K562 (cell line): ENCODE measurements at regions of chr2 and their contacts with region 1.

Region 1: DNA sequence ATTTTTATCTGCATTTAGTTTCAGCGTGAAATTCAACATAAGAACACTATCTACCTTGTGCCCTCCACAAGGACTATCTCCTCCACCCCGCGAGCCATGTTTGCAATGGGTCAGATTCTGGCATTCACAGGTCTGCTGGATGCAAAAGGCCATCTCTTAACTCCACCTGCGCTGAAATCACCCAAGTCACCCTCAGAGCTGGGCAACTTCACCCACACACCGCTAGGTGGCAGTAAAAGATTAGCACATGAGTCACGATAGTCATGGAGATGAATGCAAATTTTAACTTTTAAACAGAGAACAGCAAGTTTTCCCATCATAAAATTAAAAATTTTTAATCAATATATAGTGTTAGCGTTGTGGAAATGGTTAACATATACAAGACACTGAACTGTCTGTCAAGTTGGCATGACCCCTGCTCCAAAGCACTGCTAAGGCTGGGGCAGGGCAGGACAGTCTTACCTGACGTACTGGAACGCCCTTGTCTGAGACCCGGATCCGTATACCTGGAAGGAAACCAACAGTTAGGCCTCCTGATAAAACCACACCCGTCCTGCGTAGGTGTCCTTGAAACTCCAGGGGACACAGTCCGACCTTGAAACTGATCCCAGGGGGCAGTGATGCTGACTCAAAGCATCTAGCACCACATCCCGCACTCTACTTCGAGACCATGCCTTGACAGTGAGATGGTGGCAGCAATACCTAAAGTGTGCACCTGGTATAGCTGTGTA is 89.6 kb downstream of the UXS1 start:
- DNase-seq: peak; percentile 76 to 80 (median 78)
- ATAC-seq: peak; percentile 95
- H3K4me3 ChIP-seq: no peak overlapping the region
- H3K27ac ChIP-seq: no peak overlapping the region; the same call in 2 of the 3 replicates
- H3K4me1 ChIP-seq: no peaks in the 10 kb centered on the region
- H3K27me3 ChIP-seq: no peaks in the 10 kb centered on the region
- CTCF ChIP-seq: peak; percentile 74 to 93 (median 90)
- EP300 ChIP-seq: no peak
- POLR2A ChIP-seq: no peak
- RAD21 ChIP-seq: peak; percentile 88 to 94

Region 2: DNA sequence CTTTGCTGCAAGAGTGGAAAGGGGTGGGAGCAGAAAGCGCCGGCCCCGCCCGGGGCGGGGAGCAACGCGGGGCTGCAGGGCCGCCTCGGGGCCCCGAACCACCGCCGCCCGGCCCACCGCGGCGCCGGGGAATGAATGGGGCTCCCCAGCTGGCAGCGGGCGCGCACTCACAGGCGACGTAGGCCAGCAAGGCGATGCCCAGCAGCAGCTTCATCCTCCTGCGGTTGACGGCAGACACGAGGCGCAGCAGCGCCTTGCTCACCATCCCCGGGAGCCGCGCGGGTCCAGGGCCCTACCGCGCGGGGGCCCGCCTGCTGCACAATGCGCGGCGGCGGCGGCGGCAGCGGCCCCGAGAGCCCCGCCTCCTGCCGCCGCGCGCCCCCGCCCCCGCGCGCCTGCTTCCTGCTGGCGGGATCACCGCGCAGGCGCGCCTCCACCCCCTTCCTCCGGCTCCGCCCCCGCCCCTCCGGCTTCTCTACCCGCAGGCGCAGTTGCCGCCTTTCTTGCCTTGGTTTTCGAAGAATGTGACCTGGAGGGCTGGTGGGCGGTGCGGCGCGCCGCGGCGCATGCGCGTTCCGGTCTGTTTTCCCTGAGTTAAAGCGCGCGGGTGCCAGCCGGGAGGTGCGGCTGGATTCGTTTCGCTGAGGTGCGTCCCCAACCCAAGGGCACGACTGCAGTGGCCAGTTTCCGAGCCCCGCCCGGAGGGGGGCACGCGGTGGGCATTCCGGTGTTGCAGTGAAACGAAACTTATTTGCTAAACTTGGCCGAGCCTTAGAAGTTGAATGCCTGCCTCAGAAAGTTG is 89.7 kb after region 1 on chr2 and contains the start of gene UXS1:
- CTCF ChIA-PET with region 1: no interaction called
- POLR2A ChIA-PET with region 1: no interaction called
- in situ Hi-C with region 1: no loop called
- intact Hi-C with region 1: loop called (anchors 5 kb)
- DNase-seq: peak; percentile 98 to 99 (median 99)
- ATAC-seq: peak; percentile 87
- H3K4me3 ChIP-seq: peak within 1 kb of the TSS; percentile 97
- H3K27ac ChIP-seq: peak within 1 kb of the TSS; percentile 81
- H3K4me1 ChIP-seq: peaks cover 23 to 26% of the 10 kb centered on the region in 2 experiments; a peak in 4 of 5 replicates
- H3K27me3 ChIP-seq: no peaks in the 10 kb centered on the region
- CTCF ChIP-seq: 0 out of 6 replicates have a peak, but pooled peaks of 1 of the 3 experiments have one; percentile 3
- EP300 ChIP-seq: no peak
- POLR2A ChIP-seq: peak; percentile 85
- RAD21 ChIP-seq: peak in 1 of 2 experiments; percentile 6; a peak in 1 of 4 replicates
- polyA plus RNA-seq, gene UXS1: 5.8 to 11.3 TPM

Region 3: DNA sequence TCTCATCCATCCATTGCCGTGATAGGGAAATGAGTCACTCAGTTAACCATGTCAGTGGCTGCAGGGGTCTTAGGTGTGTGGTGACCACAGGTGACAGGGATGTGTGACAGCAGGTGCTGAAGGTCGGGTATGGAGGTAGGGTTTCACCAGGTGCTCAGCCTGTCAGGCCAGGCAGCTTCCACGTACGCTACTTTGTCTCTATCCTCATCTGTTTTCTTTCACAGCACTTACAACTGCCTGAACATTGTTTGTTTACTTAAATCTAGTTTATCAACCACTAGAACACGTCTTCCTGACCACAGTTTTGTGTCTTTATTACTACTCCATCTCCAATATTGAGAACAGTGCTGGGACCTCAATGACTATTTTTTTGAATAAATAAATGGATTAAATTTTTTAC is 101.0 kb after region 1 on chr2:
- CTCF ChIA-PET with region 1: no interaction called
- POLR2A ChIA-PET with region 1: interaction called, 3 read pairs
- in situ Hi-C with region 1: no loop called
- intact Hi-C with region 1: loop called (anchors 5 kb)
- DNase-seq: no peak
- ATAC-seq: no peak
- H3K4me3 ChIP-seq: no peak overlapping the region
- H3K27ac ChIP-seq: no peak overlapping the region
- H3K4me1 ChIP-seq: peaks cover 9% of the 10 kb centered on the region in 2 experiments; a peak in 4 of 5 replicates
- H3K27me3 ChIP-seq: no peaks in the 10 kb centered on the region
- CTCF ChIP-seq: no peak
- EP300 ChIP-seq: no peak
- POLR2A ChIP-seq: no peak
- RAD21 ChIP-seq: no peak

Region 4: DNA sequence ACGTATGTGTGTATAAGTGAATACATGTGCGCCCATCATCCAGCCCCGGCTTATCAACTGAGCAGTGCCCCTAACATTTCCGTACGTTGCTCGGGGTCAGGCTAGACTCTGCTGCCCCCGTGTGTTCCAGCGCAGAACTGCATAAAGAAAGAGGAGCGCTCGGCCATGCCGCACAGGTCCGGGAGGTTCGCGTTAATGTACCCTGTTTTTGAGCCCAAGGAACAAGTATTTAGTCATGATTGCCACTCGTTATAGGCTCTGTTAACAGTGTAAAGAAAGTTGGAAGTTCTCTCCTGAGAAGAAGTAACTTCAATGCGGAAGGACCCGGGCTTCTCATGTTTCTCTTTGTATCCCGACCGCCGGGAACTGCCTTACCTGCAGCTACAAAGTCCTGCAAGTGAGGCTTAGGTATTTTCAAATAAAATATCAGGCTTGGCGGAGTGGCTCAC is 438.3 kb after region 1 on chr2:
- CTCF ChIA-PET with region 1: interaction called, 14 read pairs
- POLR2A ChIA-PET with region 1: no interaction called
- in situ Hi-C with region 1: loop called (anchors 10 kb)
- intact Hi-C with region 1: loop called (anchors 2 kb)
- DNase-seq: peak; percentile 76 to 82 (median 81)
- ATAC-seq: peak; percentile 98
- H3K4me3 ChIP-seq: no peak overlapping the region
- H3K27ac ChIP-seq: no peak overlapping the region
- H3K4me1 ChIP-seq: no peaks in the 10 kb centered on the region
- H3K27me3 ChIP-seq: peaks cover 2 to 44% of the 10 kb centered on the region in 2 experiments; a peak in 4 of 5 replicates
- CTCF ChIP-seq: peak; percentile 75 to 84 (median 83)
- EP300 ChIP-seq: no peak
- POLR2A ChIP-seq: no peak
- RAD21 ChIP-seq: peak; percentile 80 to 82

Region 5: GRCh38 chr2:106582148-106583143 is 477.9 kb after region 1 on chr2:
- CTCF ChIA-PET with region 1: interaction called, 5 read pairs
- POLR2A ChIA-PET with region 1: no interaction called
- in situ Hi-C with region 1: no loop called
- intact Hi-C with region 1: loop called (anchors 5 kb)
- DNase-seq: peak; percentile 30 to 47 (median 40)
- ATAC-seq: peak; percentile 81
- H3K4me3 ChIP-seq: no peak overlapping the region
- H3K27ac ChIP-seq: no peak overlapping the region
- H3K4me1 ChIP-seq: peaks cover 0 to 3% of the 10 kb centered on the region in 2 experiments; a peak in 1 of 5 replicates
- H3K27me3 ChIP-seq: peaks cover 10 to 32% of the 10 kb centered on the region in 2 experiments; a peak in 4 of 5 replicates
- CTCF ChIP-seq: peak; percentile 35 to 46 (median 45); a peak in 5 of 6 replicates
- EP300 ChIP-seq: no peak
- POLR2A ChIP-seq: no peak
- RAD21 ChIP-seq: peak in 1 of 2 experiments; percentile 43; a peak in 2 of 4 replicates